ENCODE measurements at regions of chr11 and their contacts with region 1.

Region 1: GRCh38 chr11:120229451-120230424 is 10.2 kb upstream of the POU2F3 start:
- DNase-seq: peak; percentile 63
- CTCF ChIP-seq: peak; percentile 62

Region 2: DNA sequence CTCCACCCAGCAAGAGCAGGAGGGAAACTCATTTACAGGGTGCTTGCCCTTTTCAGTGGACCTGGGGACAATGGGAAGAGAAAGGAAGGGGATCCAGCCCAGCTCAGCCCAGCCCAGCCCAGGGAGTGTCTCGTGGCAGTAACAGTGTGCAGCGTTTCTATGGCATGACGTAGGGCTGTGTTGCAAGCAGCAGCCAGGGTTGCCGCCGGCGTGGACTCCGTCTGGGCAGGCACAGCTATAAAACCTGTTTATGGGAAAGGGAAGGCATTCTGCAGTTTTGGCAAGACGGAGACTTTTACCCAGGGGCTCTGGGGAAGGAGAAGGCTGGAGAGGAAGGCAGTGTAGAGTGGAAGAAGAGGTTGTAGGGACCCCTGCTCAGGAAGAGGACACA is 101.0 kb before region 1 on chr11:
- in situ Hi-C with region 1: no loop called
- DNase-seq: no peak
- CTCF ChIP-seq: no peak

Region 3: DNA sequence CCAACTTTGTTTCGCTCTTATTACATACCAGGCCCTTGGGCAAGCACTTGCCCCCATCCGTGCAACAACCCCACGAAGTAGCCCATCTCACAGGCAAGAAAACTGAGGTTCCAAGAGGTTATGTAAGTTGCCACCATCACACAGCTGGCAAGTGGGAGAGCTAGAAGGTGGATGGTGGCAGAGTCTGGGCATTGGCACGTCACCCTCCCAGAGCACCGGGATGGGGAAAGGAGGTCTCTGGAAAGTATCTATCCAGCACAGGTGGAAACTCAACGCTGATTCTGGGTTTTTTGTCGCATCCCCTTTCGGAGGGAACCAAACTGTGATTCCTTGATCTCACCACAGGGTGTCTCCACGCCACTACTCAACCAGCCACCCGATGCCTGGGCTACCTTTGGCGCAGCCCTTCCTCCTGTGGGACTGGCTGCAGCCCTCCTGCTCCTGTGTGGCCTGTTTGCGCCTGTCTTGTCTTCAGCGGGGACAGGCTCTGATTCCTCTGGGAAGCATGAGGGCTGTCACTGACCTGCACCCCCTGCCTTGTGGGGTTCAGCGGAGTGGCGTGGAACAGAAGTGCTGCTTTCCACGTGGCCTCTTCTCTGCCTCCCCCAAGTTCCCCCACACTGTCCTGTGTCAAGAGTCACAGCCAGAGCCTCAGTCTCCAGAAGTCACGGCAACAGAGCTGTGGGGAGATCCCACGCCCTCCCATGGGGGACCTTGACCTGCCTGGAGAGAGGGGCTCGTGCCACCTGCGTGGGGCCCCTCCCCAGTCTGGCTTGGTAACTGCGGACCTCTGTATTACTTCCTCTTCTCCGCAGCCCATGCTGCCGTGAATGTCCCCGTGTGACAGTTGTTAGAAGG is 57.5 kb before region 1 on chr11:
- in situ Hi-C with region 1: loop called (anchors 10 kb)
- DNase-seq: peak; percentile 81
- CTCF ChIP-seq: peak; percentile 80

Region 4: DNA sequence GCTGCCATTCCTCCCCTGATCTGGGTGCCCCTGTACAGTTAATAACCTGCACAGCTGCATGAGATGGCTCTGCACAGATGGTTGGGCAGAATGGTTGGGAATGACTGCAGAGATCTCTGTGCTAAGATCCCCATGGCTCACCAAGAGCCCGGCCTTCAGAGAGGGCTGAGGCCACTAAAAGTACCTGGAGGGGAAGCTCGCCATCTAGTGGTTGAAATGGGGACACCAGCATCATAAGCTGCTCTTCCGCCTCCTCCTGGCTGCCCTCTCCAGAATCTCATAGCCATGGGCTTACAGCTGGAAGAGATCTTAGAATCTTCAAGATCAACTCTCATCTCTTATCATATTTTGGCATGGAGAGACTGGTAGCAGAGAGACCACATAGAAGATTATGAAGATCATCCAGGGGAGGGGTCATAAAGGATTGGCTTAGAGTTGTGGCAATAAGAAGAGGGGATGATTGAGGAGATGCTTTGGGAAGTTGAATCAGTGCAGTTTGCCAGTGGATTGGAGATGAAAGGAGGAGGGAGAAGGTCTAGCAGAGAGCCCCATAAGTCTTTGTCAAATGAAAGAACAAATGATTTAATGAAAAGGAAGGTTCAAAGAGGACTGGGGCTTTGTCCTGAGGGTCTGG is 73.4 kb after region 1 on chr11:
- in situ Hi-C with region 1: loop called (anchors 5 kb)
- DNase-seq: peak; percentile 74
- CTCF ChIP-seq: peak; percentile 98